Naive thymus-derived CD4-positive, alpha-beta T cell (primary cell): ENCODE measurements at regions of chr3 and their contacts with region 1.

Region 1: GRCh38 chr3:153221748-153222162 is 59.7 kb downstream of the RAP2B start:
- DNase-seq: peak; percentile 31 to 88 (median 82)
- ATAC-seq: peak; percentile 97
- H3K4me3 ChIP-seq: peak overlapping the region; percentile 39
- H3K4me3 Mint-ChIP-seq: peak overlapping the region; percentile 66 to 89 (median 84)
- H3K27ac ChIP-seq: peak overlapping the region; percentile 70
- H3K27ac Mint-ChIP-seq: peak overlapping the region in 8 of 9 donors; percentile 90 to 98 (median 96)
- H3K4me1 ChIP-seq: peaks cover 35 to 61% of the 10 kb centered on the region in 2 donors
- H3K4me1 Mint-ChIP-seq: peaks cover 6 to 73% (median 58%) of the 10 kb centered on the region in 7 donors
- H3K27me3 ChIP-seq: no peaks in the 10 kb centered on the region
- H3K27me3 Mint-ChIP-seq: no peaks in the 10 kb centered on the region

Region 2: DNA sequence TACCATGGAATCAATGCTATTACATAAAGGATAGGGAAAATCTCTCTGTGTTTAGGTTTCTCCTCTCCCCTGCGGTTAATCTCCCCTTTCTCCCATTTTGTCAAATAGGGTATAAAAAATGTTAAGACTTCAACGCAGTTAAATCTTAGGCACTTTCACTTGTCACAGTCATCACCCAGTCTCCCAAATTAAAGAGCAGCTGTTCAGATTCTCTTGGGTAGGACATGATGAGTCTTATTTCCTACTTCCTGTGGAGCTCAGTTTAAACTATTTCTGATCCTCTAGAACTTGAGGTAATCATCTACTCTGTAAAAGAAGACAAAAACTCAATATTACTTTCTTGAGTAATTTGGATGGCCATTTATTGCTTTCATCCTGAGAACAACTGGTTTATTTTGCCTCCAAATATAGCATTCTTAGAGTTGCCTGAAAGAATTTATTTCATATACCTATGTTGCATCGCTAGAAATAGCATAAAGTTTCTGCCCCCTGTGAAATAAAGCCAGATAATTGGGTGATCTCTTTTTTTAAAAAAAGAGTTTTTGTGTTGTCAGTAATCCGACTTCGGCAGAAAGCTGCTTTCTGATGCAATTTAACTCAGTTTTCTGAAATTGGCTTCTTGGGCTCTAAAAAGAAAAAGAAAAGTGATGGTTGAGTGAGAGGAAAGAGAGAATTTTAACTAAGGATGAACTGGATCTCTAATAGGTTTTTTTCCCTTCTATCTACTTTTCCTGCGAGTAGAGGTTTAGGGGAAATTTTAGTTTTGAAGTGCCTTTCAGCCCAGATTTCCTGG is 39.1 kb before region 1 on chr3:
- CTCF ChIA-PET with region 1: no interaction called
- POLR2A ChIA-PET with region 1: no interaction called
- intact Hi-C with region 1: loop called in 1 of 2 experiments (anchors 5 kb)
- DNase-seq: no peak
- ATAC-seq: no peak
- H3K4me3 ChIP-seq: no peak overlapping the region
- H3K4me3 Mint-ChIP-seq: no peak overlapping the region
- H3K27ac ChIP-seq: no peak overlapping the region
- H3K27ac Mint-ChIP-seq: peak overlapping the region in 2 of 9 donors; percentile 6 to 41
- H3K4me1 ChIP-seq: no peaks in the 10 kb centered on the region
- H3K4me1 Mint-ChIP-seq: peaks cover 9 to 28% (median 20%) of the 10 kb centered on the region in 7 donors
- H3K27me3 ChIP-seq: no peaks in the 10 kb centered on the region
- H3K27me3 Mint-ChIP-seq: no peaks in the 10 kb centered on the region

Region 3: GRCh38 chr3:153209596-153209995 is 12.2 kb before region 1 on chr3:
- CTCF ChIA-PET with region 1: interaction called, 9 read pairs
- POLR2A ChIA-PET with region 1: interaction called, 15 read pairs
- intact Hi-C with region 1: loop called in 1 of 2 experiments (anchors 1 kb)
- DNase-seq: no peak
- ATAC-seq: peak; percentile 85
- H3K4me3 ChIP-seq: no peak overlapping the region
- H3K4me3 Mint-ChIP-seq: peak overlapping the region in 9 of 10 donors; percentile 20 to 80 (median 72)
- H3K27ac ChIP-seq: no peak overlapping the region
- H3K27ac Mint-ChIP-seq: peak overlapping the region in 7 of 9 donors; percentile 0 to 87 (median 71)
- H3K4me1 ChIP-seq: peaks cover 6 to 14% of the 10 kb centered on the region in 2 donors
- H3K4me1 Mint-ChIP-seq: peaks cover 15 to 60% (median 45%) of the 10 kb centered on the region in 7 donors
- H3K27me3 ChIP-seq: no peaks in the 10 kb centered on the region
- H3K27me3 Mint-ChIP-seq: peaks cover 0 to 1% (median 0%) of the 10 kb centered on the region in 5 donors

Region 4: DNA sequence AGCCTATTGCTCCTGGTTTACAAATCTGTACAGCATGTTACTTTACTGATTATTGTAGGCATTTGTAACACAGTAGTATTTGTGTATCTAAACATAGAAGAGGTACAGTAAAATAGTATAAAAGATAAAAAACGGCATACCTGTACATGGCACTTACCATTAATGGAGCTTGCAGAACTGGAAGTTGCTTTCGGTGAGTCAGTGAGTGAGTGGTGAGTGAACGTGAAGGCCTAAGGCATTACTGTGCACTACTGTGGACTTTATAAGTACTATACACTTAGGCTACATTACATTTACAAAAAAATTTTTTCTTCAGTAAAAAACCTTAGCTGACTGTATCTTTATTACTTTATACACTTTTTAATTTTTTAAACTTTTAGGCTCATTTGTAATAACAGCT is 31.2 kb after region 1 on chr3:
- CTCF ChIA-PET with region 1: interaction called, 7 read pairs
- POLR2A ChIA-PET with region 1: interaction called, 4 read pairs
- intact Hi-C with region 1: loop called in 1 of 2 experiments (anchors 5 kb)
- DNase-seq: no peak
- ATAC-seq: no peak
- H3K4me3 ChIP-seq: no peak overlapping the region
- H3K4me3 Mint-ChIP-seq: no peak overlapping the region
- H3K27ac ChIP-seq: no peak overlapping the region
- H3K27ac Mint-ChIP-seq: peak overlapping the region in 1 of 9 donors; percentile 17
- H3K4me1 ChIP-seq: peaks cover 0 to 7% of the 10 kb centered on the region in 2 donors
- H3K4me1 Mint-ChIP-seq: peaks cover 7 to 62% (median 48%) of the 10 kb centered on the region in 7 donors
- H3K27me3 ChIP-seq: no peaks in the 10 kb centered on the region
- H3K27me3 Mint-ChIP-seq: no peaks in the 10 kb centered on the region

Region 5: DNA sequence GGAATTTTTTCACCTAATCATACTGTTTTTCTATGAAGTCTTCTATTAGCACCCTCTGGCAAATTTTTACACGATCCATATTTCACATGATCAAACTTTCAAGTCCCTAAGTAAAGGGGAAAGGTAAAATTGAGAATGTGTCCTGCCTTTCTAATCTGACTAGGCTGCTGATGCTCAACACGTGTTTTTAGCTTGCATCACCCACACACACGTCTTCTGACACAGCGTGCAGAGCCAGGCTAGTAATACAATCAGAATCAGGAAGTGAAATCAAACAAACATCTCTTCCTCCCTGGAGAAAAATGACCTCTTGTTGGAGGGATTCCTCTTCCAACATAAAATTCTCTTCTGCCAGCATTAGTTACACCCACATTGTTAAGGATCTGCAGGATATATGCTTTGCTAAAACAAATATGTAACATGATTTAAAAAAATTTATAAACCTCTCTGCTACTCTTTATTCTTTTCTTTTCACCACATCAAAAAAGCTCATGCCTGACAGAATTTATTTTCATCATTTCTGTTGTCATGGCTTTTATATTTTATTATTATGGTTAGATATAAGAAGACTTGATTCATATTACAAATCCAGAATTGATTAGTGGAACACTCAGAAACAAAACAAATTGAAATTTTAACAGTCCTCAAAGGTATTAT is 62.7 kb after region 1 on chr3:
- CTCF ChIA-PET with region 1: no interaction called
- POLR2A ChIA-PET with region 1: interaction called, 26 read pairs
- intact Hi-C with region 1: loop called in 1 of 2 experiments (anchors 1 kb)
- DNase-seq: peak in 7 of 9 donors; percentile 7 to 53 (median 40)
- ATAC-seq: peak; percentile 85
- H3K4me3 ChIP-seq: no peak overlapping the region
- H3K4me3 Mint-ChIP-seq: peak overlapping the region; percentile 2 to 78 (median 54)
- H3K27ac ChIP-seq: peak overlapping the region; percentile 1
- H3K27ac Mint-ChIP-seq: peak overlapping the region; percentile 60 to 92 (median 74)
- H3K4me1 ChIP-seq: peaks cover 13 to 29% of the 10 kb centered on the region in 2 donors
- H3K4me1 Mint-ChIP-seq: peaks cover 25 to 48% (median 43%) of the 10 kb centered on the region in 7 donors
- H3K27me3 ChIP-seq: no peaks in the 10 kb centered on the region
- H3K27me3 Mint-ChIP-seq: no peaks in the 10 kb centered on the region

Region 6: DNA sequence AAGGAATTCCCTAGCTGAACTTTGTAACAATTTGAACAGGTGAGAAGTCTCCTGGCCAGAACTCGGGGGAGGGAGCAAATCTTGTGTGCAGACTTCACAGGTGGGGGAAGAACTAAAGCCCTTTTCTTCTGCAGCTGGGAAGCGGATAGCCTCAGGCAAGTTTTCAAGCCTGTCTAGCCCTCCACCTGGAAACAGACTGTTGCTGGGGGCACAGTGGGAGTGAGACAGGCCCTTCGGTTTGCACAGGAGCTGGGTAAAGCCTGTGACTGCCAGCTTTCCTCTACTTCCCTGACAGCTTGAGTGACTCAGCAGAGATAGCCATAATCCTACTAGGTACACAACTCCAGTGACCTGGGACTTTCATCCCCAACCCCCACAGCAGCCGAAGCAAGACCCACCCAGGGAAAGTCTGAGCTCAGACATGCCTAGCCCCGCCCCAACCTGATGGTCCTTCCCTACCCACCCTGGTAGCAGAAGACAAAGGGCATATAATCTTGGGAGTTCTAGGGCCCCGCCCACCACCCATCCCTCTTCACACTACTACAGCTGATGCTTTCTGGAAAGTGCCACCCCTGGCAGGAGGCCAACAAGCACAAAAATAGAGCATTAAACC is 419.0 kb after region 1 on chr3:
- CTCF ChIA-PET with region 1: no interaction called
- POLR2A ChIA-PET with region 1: no interaction called
- intact Hi-C with region 1: loop called in 1 of 2 experiments (anchors 1 kb)
- DNase-seq: no peak
- ATAC-seq: no peak
- H3K4me3 ChIP-seq: no peak overlapping the region
- H3K4me3 Mint-ChIP-seq: peak overlapping the region in 1 of 10 donors; percentile 68
- H3K27ac ChIP-seq: no peak overlapping the region
- H3K27ac Mint-ChIP-seq: no peak overlapping the region
- H3K4me1 ChIP-seq: peaks cover 16 to 24% of the 10 kb centered on the region in 2 donors
- H3K4me1 Mint-ChIP-seq: peaks cover 37 to 53% (median 45%) of the 10 kb centered on the region in 7 donors
- H3K27me3 ChIP-seq: no peaks in the 10 kb centered on the region
- H3K27me3 Mint-ChIP-seq: no peaks in the 10 kb centered on the region